PC-9 (cell line): ENCODE measurements at regions of chr6 and their contacts with region 1.

Region 1: GRCh38 chr6:30396833-30397479 is 52.0 kb downstream of the RPP21 start:
- DNase-seq: peak in 1 of 2 experiments; percentile 67
- H3K4me3 ChIP-seq: no peak overlapping the region
- H3K27ac ChIP-seq: no peak overlapping the region
- H3K4me1 ChIP-seq: no peaks in the 10 kb centered on the region
- H3K27me3 ChIP-seq: peaks cover 49% of the 10 kb centered on the region
- CTCF ChIP-seq: peak; percentile 77

Region 2: DNA sequence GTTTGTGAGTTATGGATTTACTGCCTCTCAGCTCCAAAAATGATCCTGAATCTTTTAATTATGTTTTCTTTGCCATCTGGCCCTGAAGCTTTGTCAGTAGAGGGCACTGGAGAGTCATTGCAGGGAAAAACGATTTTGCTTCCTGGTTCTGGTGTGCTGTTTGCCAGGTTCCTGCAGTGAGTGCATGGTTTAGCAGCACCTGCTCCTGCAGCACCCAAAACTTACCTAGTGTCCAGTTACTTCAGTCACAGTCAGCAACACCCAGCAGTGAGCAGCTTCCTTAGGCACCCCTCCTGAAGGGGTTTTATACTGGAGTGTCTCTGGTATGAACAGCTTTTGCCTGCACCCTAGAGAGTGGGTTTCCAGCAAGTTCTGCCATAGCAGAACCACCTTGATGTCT is 177.7 kb before region 1 on chr6:
- CTCF ChIA-PET with region 1: no interaction called
- POLR2A ChIA-PET with region 1: no interaction called
- intact Hi-C with region 1: loop called (anchors 1 kb)
- DNase-seq: peak; percentile 59 to 63
- H3K4me3 ChIP-seq: no peak overlapping the region
- H3K27ac ChIP-seq: no peak overlapping the region
- H3K4me1 ChIP-seq: no peaks in the 10 kb centered on the region
- H3K27me3 ChIP-seq: no peaks in the 10 kb centered on the region
- CTCF ChIP-seq: peak; percentile 76

Region 3: DNA sequence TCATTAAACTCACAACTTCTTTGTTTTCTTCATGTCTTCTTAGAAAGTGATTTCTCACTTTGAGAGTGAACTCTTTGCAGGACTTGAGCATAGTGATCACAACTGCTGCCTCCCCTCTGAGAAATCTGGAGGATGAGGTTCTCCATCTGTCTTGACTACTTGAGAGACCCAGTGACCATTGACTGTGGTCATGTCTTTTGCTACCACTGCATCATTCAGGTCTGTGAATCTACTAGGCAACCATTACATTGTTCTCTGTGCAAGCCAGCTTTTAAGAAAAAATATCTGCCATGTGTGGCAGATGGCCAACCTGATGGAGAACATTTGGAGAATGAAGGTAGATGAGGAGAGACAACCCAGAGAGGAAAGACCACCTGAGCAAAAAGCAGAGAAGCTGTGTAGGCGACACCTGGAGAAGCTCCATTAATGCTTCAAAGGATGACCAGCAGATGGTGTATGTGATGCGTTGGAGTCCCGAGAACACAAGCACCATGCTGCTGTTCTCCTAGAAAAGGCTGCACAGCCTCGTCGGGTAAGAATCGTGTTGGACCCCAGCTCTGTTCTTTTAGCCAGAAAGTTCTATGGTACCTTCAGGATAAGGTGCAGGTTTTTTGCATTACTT is 158.7 kb before region 1 on chr6:
- CTCF ChIA-PET with region 1: interaction called, 3 read pairs
- POLR2A ChIA-PET with region 1: no interaction called
- intact Hi-C with region 1: loop called (anchors 2 kb)
- DNase-seq: no peak
- H3K4me3 ChIP-seq: no peak overlapping the region
- H3K27ac ChIP-seq: no peak overlapping the region
- H3K4me1 ChIP-seq: no peaks in the 10 kb centered on the region
- H3K27me3 ChIP-seq: peaks cover 67% of the 10 kb centered on the region
- CTCF ChIP-seq: peak; percentile 55; the same call in 1 of the 2 replicates

Region 4: GRCh38 chr6:30357678-30358540 is 39.0 kb before region 1 on chr6:
- CTCF ChIA-PET with region 1: no interaction called
- POLR2A ChIA-PET with region 1: interaction called, 13 read pairs
- intact Hi-C with region 1: no loop called
- DNase-seq: peak in 1 of 2 experiments; percentile 31
- H3K4me3 ChIP-seq: no peak overlapping the region
- H3K27ac ChIP-seq: no peak overlapping the region
- H3K4me1 ChIP-seq: no peaks in the 10 kb centered on the region
- H3K27me3 ChIP-seq: peaks cover 47% of the 10 kb centered on the region
- CTCF ChIP-seq: peak; percentile 62

Region 5: GRCh38 chr6:30450909-30451841 is 54.2 kb after region 1 on chr6:
- CTCF ChIA-PET with region 1: no interaction called
- POLR2A ChIA-PET with region 1: no interaction called
- intact Hi-C with region 1: no loop called
- DNase-seq: no peak
- H3K4me3 ChIP-seq: no peak overlapping the region
- H3K27ac ChIP-seq: no peak overlapping the region
- H3K4me1 ChIP-seq: no peaks in the 10 kb centered on the region
- H3K27me3 ChIP-seq: peaks cover 83% of the 10 kb centered on the region
- CTCF ChIP-seq: no peak